ENCODE measurements at regions of chr19 and their contacts with region 1.

Region 1: DNA sequence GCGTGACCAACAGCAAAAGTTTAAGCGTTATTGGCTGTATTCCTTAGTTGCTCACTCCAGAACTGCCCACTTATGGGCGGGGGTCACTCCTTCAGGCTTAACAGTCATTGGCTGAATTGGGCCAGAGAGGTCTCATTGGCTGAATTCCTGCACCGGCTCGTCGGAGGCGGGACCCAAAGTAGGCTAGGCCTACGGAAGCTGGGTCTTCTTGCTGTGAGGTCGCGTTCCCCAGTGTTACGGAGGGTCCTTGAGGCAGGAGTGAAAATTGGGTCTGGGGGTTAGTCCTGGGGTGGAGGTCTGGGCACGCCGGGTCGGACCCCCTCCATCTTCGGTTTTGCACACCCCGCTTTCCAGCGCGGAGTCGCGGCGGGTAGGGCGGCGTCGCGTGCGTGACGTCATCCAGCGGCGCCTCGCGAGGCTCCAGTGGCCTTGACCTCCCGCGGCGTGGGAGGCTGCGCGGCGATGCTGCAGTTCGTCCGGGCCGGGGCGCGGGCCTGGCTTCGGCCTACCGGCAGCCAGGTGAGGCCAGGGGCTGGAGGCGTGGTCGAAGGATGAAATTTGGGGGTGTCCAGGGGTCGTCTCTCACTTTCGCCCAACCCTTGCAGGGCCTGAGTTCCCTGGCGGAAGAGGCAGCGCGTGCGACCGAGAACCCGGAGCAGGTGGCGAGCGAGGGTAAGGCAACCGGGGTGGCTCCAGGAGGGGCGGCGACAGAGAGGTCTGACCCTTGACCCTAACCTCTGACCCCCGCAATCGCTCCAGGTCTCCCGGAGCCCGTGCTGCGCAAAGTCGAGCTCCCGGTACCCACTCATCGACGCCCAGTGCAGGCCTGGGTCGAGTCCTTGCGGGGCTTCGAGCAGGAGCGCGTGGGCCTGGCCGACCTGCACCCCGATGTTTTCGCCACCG is at the start of gene MRPL4:
- DNase-seq: peak; percentile 92
- ATAC-seq: peak; percentile 95
- H3K4me3 Mint-ChIP-seq: peak within 1 kb of the TSS; percentile 98
- H3K27ac Mint-ChIP-seq: peak within 1 kb of the TSS; percentile 96
- H3K4me1 Mint-ChIP-seq: peaks cover 33% of the 10 kb centered on the region
- H3K27me3 Mint-ChIP-seq: no peaks in the 10 kb centered on the region
- CTCF ChIP-seq: no peak
- total RNA-seq, gene MRPL4: 66.9 and 68.3 TPM in 2 replicates

Region 2: DNA sequence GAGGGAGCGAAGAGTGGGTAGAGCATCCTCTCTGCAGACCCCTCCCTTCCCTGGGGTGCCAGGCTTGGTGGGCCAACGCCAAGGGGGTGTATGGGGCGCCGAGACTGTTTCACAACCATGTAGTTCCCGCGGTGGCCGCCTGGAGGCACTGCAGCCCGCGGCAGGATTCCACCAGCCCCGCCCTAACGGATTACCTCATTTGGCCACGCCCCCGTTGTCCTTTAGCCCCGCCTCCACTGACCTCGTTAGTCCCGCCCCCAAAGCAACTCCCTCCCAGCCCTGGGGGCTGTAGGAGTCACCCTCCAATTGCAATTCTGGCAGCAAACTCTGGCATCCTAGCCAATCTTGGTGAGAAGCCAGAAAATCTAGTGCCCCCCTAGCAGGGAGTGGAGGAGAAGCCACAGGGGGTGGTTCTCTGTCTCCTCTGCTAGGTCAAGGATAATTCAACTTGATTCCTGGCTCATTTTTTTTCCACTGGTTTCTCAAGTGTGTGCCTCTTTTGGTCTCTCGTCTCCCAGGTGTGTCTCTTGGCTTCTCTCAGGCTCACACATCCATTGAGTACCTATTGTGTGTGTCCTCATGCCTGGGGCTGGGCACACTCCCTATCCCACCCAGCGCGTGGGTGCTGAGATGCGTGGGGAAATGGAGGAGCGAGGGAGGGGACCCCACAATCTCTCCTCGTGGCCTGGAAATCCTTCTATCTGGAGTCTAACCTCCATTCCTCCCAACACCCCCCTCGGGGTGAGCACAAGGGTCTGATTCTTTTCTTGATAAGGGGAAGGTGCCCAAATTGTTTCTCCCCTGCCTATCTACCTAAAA is 317.7 kb before region 1 on chr19:
- CTCF ChIA-PET with region 1: interaction called, 44 read pairs
- POLR2A ChIA-PET with region 1: no interaction called
- intact Hi-C with region 1: loop called (anchors 1 kb)
- DNase-seq: peak; percentile 67
- ATAC-seq: peak; percentile 83
- H3K4me3 Mint-ChIP-seq: no peak overlapping the region
- H3K27ac Mint-ChIP-seq: no peak overlapping the region
- H3K4me1 Mint-ChIP-seq: peaks cover 27% of the 10 kb centered on the region
- H3K27me3 Mint-ChIP-seq: peaks cover 52% of the 10 kb centered on the region
- CTCF ChIP-seq: no peak

Region 3: GRCh38 chr19:10027158-10027693 is 224.8 kb before region 1 on chr19:
- CTCF ChIA-PET with region 1: interaction called, 12 read pairs
- POLR2A ChIA-PET with region 1: no interaction called
- intact Hi-C with region 1: loop called (anchors 5 kb)
- DNase-seq: no peak
- ATAC-seq: no peak
- H3K4me3 Mint-ChIP-seq: no peak overlapping the region
- H3K27ac Mint-ChIP-seq: no peak overlapping the region
- H3K4me1 Mint-ChIP-seq: no peaks in the 10 kb centered on the region
- H3K27me3 Mint-ChIP-seq: peaks cover 23% of the 10 kb centered on the region
- CTCF ChIP-seq: no peak

Region 4: DNA sequence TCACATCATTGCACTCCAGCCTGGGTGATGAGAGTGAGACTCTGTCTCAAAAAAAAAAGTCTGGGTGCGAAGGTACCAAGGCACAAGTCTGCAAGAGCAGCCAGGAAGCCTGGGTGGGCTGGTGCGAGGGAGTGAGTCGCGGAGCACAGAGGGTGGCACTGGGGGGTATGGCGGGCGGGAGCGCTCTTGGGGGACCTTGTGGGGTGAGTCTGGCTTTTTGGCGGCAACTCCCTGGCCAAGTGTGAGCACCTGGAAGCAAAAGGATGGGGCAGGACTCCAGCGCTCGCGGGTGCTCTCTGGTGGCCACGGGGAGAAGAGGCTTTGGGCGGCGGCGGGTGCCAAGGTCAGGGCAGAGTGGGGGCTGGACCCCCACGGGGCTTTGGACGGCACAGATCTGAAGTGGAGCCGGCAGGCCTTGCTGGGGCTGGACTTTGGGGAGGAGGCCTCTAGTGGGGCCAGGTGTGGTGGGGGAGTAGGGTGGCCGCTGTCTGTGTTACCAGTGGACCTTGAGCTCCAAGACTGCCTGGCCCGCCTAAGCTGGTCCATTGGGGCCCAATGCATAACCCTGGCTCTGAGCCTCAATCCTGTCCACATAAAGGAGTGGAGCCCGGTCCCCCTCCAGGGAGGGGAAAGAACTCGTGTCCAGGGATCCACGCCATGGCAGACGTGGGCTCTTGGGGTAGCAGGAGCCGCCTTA is 139.0 kb before region 1 on chr19:
- CTCF ChIA-PET with region 1: no interaction called
- POLR2A ChIA-PET with region 1: interaction called, 5 read pairs
- intact Hi-C with region 1: loop called (anchors 2 kb)
- DNase-seq: peak; percentile 66
- ATAC-seq: peak; percentile 49
- H3K4me3 Mint-ChIP-seq: peak overlapping the region; percentile 76
- H3K27ac Mint-ChIP-seq: peak overlapping the region; percentile 82
- H3K4me1 Mint-ChIP-seq: peaks cover 40% of the 10 kb centered on the region
- H3K27me3 Mint-ChIP-seq: no peaks in the 10 kb centered on the region
- CTCF ChIP-seq: no peak

Region 5: GRCh38 chr19:10194500-10195289 is 57.3 kb before region 1 on chr19 and contains the start of gene DNMT1:
- CTCF ChIA-PET with region 1: interaction called, 12 read pairs
- POLR2A ChIA-PET with region 1: interaction called, 5 read pairs
- intact Hi-C with region 1: loop called (anchors 1 kb)
- DNase-seq: peak; percentile 94
- ATAC-seq: peak; percentile 97
- H3K4me3 Mint-ChIP-seq: peak within 1 kb of the TSS; percentile 94
- H3K27ac Mint-ChIP-seq: peak within 1 kb of the TSS; percentile 89
- H3K4me1 Mint-ChIP-seq: peaks cover 34% of the 10 kb centered on the region
- H3K27me3 Mint-ChIP-seq: no peaks in the 10 kb centered on the region
- CTCF ChIP-seq: no peak
- total RNA-seq, gene DNMT1: 136 and 156 TPM in 2 replicates

Region 6: GRCh38 chr19:10230861-10231611 is 21.0 kb before region 1 on chr19 and contains the start of gene S1PR2:
- CTCF ChIA-PET with region 1: interaction called, 93 read pairs
- POLR2A ChIA-PET with region 1: interaction called, 14 read pairs
- intact Hi-C with region 1: loop called (anchors 1 kb)
- DNase-seq: peak; percentile 64
- ATAC-seq: peak; percentile 25
- H3K4me3 Mint-ChIP-seq: peak within 1 kb of the TSS; percentile 84
- H3K27ac Mint-ChIP-seq: peak within 1 kb of the TSS; percentile 46
- H3K4me1 Mint-ChIP-seq: peaks cover 46% of the 10 kb centered on the region
- H3K27me3 Mint-ChIP-seq: no peaks in the 10 kb centered on the region
- CTCF ChIP-seq: no peak
- total RNA-seq, gene S1PR2: 5.3 and 5.6 TPM in 2 replicates

Region 7: GRCh38 chr19:10388957-10389356 is 136.9 kb after region 1 on chr19:
- CTCF ChIA-PET with region 1: interaction called, 7 read pairs
- POLR2A ChIA-PET with region 1: interaction called, 10 read pairs
- intact Hi-C with region 1: no loop called
- DNase-seq: peak; percentile 77
- ATAC-seq: peak; percentile 56
- H3K4me3 Mint-ChIP-seq: no peak overlapping the region
- H3K27ac Mint-ChIP-seq: peak overlapping the region; percentile 35
- H3K4me1 Mint-ChIP-seq: peaks cover 23% of the 10 kb centered on the region
- H3K27me3 Mint-ChIP-seq: no peaks in the 10 kb centered on the region
- CTCF ChIP-seq: peak; percentile 92